ENCODE measurements at regions of chr5 and their contacts with region 1.

Region 1: GRCh38 chr5:108748401-108749127 is 867 bp downstream of the FER start:
- DNase-seq: peak; percentile 92
- ATAC-seq: peak; percentile 92
- H3K4me3 Mint-ChIP-seq: peak overlapping the region; percentile 92
- H3K27ac Mint-ChIP-seq: peak overlapping the region; percentile 94
- H3K4me1 Mint-ChIP-seq: peaks cover 22% of the 10 kb centered on the region
- H3K27me3 Mint-ChIP-seq: no peaks in the 10 kb centered on the region
- CTCF ChIP-seq: no peak

Region 2: DNA sequence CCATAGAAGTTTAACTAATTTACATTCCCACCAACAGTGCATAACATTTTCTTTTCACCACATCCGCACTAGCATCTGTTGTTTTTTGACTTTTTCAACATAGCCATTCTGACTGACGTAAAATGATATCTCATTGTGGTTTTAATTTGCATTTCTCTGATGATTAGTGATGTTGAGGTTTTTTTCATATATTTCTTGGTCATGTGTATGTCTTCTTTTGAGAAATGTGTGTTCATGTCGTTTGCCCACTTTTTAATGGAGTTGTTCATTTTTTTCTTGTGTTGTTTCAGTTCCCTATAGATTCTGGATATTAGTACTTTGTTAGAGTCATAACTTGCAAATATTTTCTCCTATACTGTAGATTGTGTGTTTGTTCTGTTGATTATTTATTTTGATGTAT is 162.5 kb after region 1 on chr5:
- CTCF ChIA-PET with region 1: no interaction called
- POLR2A ChIA-PET with region 1: no interaction called
- intact Hi-C with region 1: loop called (anchors 5 kb)
- DNase-seq: no peak
- ATAC-seq: peak; percentile 61
- H3K4me3 Mint-ChIP-seq: peak overlapping the region; percentile 17
- H3K27ac Mint-ChIP-seq: peak overlapping the region; percentile 86
- H3K4me1 Mint-ChIP-seq: peaks cover 14% of the 10 kb centered on the region
- H3K27me3 Mint-ChIP-seq: no peaks in the 10 kb centered on the region
- CTCF ChIP-seq: no peak

Region 3: DNA sequence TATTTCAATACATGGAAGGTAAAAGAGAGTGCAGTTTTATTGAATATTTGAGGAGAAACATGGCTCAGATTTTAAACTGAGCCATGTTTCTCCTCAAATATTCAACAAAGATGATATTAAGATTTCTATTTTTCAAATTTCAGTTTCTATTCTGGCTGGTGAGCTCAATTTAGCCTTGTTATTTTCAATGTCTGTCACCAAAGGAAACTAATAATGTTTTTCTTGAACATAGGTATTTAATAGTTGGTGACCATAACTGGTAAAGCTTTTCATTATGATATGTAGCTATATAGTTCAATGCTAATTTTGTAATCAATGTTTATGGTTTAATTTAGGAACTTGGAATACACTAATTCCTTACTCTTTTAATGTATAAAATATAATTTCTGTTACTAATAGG is 176.5 kb after region 1 on chr5:
- CTCF ChIA-PET with region 1: no interaction called
- POLR2A ChIA-PET with region 1: no interaction called
- intact Hi-C with region 1: loop called (anchors 5 kb)
- DNase-seq: no peak
- ATAC-seq: no peak
- H3K4me3 Mint-ChIP-seq: no peak overlapping the region
- H3K27ac Mint-ChIP-seq: no peak overlapping the region
- H3K4me1 Mint-ChIP-seq: no peaks in the 10 kb centered on the region
- H3K27me3 Mint-ChIP-seq: no peaks in the 10 kb centered on the region
- CTCF ChIP-seq: no peak

Region 4: GRCh38 chr5:109099081-109099480 is 350.5 kb after region 1 on chr5:
- CTCF ChIA-PET with region 1: no interaction called
- POLR2A ChIA-PET with region 1: no interaction called
- intact Hi-C with region 1: no loop called
- DNase-seq: no peak
- ATAC-seq: no peak
- H3K4me3 Mint-ChIP-seq: no peak overlapping the region
- H3K27ac Mint-ChIP-seq: no peak overlapping the region
- H3K4me1 Mint-ChIP-seq: no peaks in the 10 kb centered on the region
- H3K27me3 Mint-ChIP-seq: no peaks in the 10 kb centered on the region
- CTCF ChIP-seq: no peak

Region 5: GRCh38 chr5:109468737-109469420 is 720.3 kb after region 1 on chr5:
- CTCF ChIA-PET with region 1: no interaction called
- POLR2A ChIA-PET with region 1: no interaction called
- intact Hi-C with region 1: loop called (anchors 2 kb)
- DNase-seq: peak; percentile 55
- ATAC-seq: peak; percentile 93
- H3K4me3 Mint-ChIP-seq: no peak overlapping the region
- H3K27ac Mint-ChIP-seq: no peak overlapping the region
- H3K4me1 Mint-ChIP-seq: peaks cover 6% of the 10 kb centered on the region
- H3K27me3 Mint-ChIP-seq: no peaks in the 10 kb centered on the region
- CTCF ChIP-seq: no peak

Measured in activated B cell treated with CpG ODN at 0.5 μM for 24 hours (primary cell).